ENCODE measurements at regions of chr17 and their contacts with region 1.

Region 1: DNA sequence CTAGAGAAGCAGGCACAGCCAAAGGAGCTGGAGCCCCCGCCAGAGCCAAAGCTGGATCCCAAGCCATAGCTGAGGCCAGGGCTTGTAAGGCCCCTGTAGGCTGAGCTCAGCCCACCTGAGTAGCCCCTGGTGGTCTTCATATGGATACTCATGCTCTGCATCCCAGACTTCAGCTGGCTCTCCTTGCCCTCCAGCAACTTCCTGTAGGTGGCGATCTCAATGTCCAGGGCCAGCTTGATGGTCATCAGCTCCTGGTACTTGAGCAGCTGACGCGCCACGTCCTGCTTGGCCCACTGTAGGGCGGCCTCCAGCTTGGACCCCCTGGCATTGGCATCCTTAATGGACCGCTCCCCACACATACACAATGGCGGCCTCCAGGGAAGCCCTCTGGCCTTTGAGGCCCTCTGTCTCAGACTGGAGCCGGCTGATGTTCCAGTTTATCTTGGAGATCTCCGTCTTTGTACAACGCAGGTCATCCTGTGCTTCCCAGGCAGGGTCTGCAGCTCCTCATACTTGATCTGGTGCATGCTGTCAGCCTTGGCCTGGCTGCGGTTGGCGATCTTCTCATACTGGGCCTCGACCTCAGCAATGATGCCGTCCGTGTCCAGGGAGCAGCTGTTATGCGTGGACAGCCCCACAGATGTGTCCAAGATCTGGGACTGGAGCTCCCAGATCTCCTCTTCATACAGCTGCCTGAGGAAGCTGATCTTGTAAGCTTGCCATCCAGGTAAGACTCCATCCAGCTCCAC is 28.9 kb downstream of the IKZF3 start:
- DNase-seq: peak; percentile 79
- H3K4me3 Mint-ChIP-seq: no peak overlapping the region
- H3K27ac Mint-ChIP-seq: no peak overlapping the region
- H3K4me1 Mint-ChIP-seq: no peaks in the 10 kb centered on the region
- H3K27me3 Mint-ChIP-seq: no peaks in the 10 kb centered on the region
- CTCF ChIP-seq: no peak

Region 2: GRCh38 chr17:39636927-39637736 is 198.1 kb before region 1 on chr17 and contains the start of gene STARD3:
- CTCF ChIA-PET with region 1: interaction called, 120 read pairs
- intact Hi-C with region 1: no loop called
- DNase-seq: no peak
- H3K4me3 Mint-ChIP-seq: peak within 1 kb of the TSS; percentile 71
- H3K27ac Mint-ChIP-seq: peak within 1 kb of the TSS; percentile 28
- H3K4me1 Mint-ChIP-seq: peaks cover 61% of the 10 kb centered on the region
- H3K27me3 Mint-ChIP-seq: peaks cover 5% of the 10 kb centered on the region
- CTCF ChIP-seq: no peak
- total RNA-seq, gene STARD3: 2,579 and 2,697 TPM in 2 replicates

Region 3: DNA sequence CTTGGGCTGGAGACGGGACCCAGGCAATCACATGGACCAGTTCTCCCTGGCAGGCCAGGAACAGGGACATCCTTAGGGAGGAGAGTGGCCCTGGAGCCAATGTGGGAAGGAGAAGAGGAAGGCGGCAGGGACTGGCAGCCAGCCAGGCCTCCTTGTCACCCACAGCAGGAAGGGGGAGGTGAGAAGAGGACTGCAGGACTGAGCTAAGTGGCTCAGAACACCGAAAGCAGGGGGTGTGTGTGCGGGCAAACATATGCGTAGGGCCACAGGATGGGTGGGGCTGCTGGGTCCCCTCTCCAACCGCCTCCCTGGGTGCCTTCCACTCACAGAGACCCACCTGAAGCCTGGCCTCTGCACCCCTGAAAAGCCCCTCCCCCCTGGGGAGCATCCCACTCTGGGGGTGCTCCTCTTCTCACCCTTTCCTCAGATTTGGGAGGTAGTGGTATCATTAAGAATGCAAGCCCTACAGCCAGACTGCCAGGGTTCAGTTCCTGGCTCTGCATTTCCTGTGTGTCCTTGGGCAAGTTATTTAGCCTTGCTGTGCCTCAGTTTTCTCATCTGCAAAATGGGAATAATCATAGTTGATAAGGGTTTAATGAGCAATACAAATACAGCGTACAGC is 158.9 kb before region 1 on chr17:
- CTCF ChIA-PET with region 1: interaction called, 109 read pairs
- intact Hi-C with region 1: no loop called
- DNase-seq: peak; percentile 100
- H3K4me3 Mint-ChIP-seq: peak overlapping the region; percentile 3
- H3K27ac Mint-ChIP-seq: peak overlapping the region; percentile 62
- H3K4me1 Mint-ChIP-seq: peaks cover 91% of the 10 kb centered on the region
- H3K27me3 Mint-ChIP-seq: peaks cover 6% of the 10 kb centered on the region
- CTCF ChIP-seq: no peak

Region 4: GRCh38 chr17:39738931-39739884 is 96.0 kb before region 1 on chr17:
- CTCF ChIA-PET with region 1: interaction called, 1,211 read pairs
- intact Hi-C with region 1: no loop called
- DNase-seq: peak; percentile 100
- H3K4me3 Mint-ChIP-seq: peak overlapping the region; percentile 77
- H3K27ac Mint-ChIP-seq: peak overlapping the region; percentile 21
- H3K4me1 Mint-ChIP-seq: peaks cover 54% of the 10 kb centered on the region
- H3K27me3 Mint-ChIP-seq: no peaks in the 10 kb centered on the region
- CTCF ChIP-seq: no peak

Region 5: GRCh38 chr17:39845052-39845846 is 10.0 kb after region 1 on chr17:
- CTCF ChIA-PET with region 1: interaction called, 809 read pairs
- intact Hi-C with region 1: no loop called
- DNase-seq: peak; percentile 81
- H3K4me3 Mint-ChIP-seq: no peak overlapping the region
- H3K27ac Mint-ChIP-seq: no peak overlapping the region
- H3K4me1 Mint-ChIP-seq: peaks cover 10% of the 10 kb centered on the region
- H3K27me3 Mint-ChIP-seq: no peaks in the 10 kb centered on the region
- CTCF ChIP-seq: no peak

Region 6: DNA sequence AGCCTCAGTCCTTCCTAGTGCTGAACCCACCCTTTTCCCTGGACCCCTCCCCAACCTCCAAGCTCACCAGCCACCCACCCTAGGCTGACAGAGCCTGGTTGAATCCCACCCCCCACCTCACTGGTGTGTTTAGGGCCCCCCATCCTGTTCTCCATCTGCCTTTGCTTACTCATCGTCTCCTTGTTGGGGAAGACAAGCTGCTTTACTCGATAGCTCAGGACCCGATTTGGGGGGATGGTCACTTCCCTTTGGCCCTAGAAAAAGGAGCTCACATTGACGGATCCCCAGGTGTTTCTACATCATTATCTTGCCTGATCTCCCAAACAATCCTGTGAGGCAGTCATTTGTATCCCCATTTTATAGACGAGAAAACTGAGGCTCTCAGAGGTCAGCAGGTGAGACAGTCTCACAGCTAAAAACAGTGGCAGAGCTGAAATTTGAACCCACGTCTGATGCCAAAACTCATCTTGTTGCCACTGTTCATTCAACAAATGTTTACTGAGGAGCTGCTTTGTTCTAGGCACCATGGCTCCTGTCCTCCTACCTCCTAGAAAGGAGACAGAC is 73.7 kb after region 1 on chr17:
- CTCF ChIA-PET with region 1: interaction called, 1,004 read pairs
- intact Hi-C with region 1: no loop called
- DNase-seq: peak; percentile 67
- H3K4me3 Mint-ChIP-seq: no peak overlapping the region
- H3K27ac Mint-ChIP-seq: no peak overlapping the region
- H3K4me1 Mint-ChIP-seq: no peaks in the 10 kb centered on the region
- H3K27me3 Mint-ChIP-seq: no peaks in the 10 kb centered on the region
- CTCF ChIP-seq: no peak

Region 7: GRCh38 chr17:40474419-40475002 is 639.3 kb after region 1 on chr17:
- CTCF ChIA-PET with region 1: interaction called, 13 read pairs
- intact Hi-C with region 1: no loop called
- DNase-seq: no peak
- H3K4me3 Mint-ChIP-seq: no peak overlapping the region
- H3K27ac Mint-ChIP-seq: no peak overlapping the region
- H3K4me1 Mint-ChIP-seq: no peaks in the 10 kb centered on the region
- H3K27me3 Mint-ChIP-seq: peaks cover 65% of the 10 kb centered on the region
- CTCF ChIP-seq: no peak